CD4-positive, alpha-beta memory T cell (primary cell): ENCODE measurements at regions of chr1 and their contacts with region 1.

Region 1: DNA sequence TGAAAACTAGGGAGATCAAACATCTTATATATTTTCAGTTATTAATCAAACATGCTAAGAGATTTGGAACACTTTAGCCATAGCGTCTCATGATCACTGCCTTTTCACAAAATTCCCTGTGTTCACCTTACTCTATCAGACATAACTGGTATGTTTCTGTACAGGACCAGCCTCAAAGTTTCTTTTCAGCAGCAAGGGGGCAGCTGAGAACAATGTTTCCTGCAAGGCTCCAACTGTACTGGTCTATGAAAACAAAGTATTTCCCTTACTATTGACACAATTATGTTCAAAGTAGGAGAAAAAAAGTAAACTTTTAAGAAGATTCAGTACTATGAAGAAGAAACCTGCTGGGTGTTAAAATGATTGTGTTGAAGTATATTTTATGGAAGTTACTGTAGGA is 98.5 kb downstream of the ATF6 start:
- DNase-seq: peak in 2 of 5 donors; percentile 2 to 5
- H3K4me3 ChIP-seq: no peak overlapping the region
- H3K4me3 Mint-ChIP-seq: no peak overlapping the region
- H3K27ac ChIP-seq: no peak overlapping the region
- H3K27ac Mint-ChIP-seq: no peak overlapping the region
- H3K4me1 ChIP-seq: no peaks in the 10 kb centered on the region
- H3K4me1 Mint-ChIP-seq: peaks cover 0 to under 1% (median 0%) of the 10 kb centered on the region in 4 donors
- H3K27me3 ChIP-seq: no peaks in the 10 kb centered on the region
- H3K27me3 Mint-ChIP-seq: no peaks in the 10 kb centered on the region

Region 2: DNA sequence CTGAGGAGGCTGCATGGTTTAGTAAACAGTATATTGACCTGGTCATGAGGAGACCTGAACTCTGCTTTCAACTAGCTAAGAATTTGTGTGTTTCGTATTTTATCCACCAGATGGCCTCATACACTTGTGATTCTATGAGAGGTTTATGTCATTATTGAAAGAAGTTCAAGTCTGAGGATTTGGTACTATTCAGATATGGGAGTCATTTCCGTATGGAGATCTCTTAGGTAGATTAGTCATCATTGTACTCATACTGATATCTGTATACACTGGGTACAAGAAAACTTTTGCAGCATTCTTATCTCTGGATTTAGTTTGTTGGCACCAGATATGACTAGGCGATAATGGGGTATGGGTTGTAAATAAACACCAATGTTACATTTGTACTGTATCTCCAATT is 71.8 kb before region 1 on chr1:
- CTCF ChIA-PET with region 1: no interaction called
- POLR2A ChIA-PET with region 1: no interaction called
- intact Hi-C with region 1: no loop called
- DNase-seq: peak in 4 of 5 donors; percentile 42 to 49 (median 44)
- H3K4me3 ChIP-seq: no peak overlapping the region
- H3K4me3 Mint-ChIP-seq: no peak overlapping the region
- H3K27ac ChIP-seq: no peak overlapping the region
- H3K27ac Mint-ChIP-seq: peak overlapping the region in 1 of 7 donors; percentile 10
- H3K4me1 ChIP-seq: no peaks in the 10 kb centered on the region
- H3K4me1 Mint-ChIP-seq: peaks cover 3 to 7% (median 6%) of the 10 kb centered on the region in 4 donors
- H3K27me3 ChIP-seq: no peaks in the 10 kb centered on the region
- H3K27me3 Mint-ChIP-seq: no peaks in the 10 kb centered on the region

Region 3: GRCh38 chr1:162040681-162041080 is 176.1 kb after region 1 on chr1:
- CTCF ChIA-PET with region 1: interaction called, 15 read pairs
- POLR2A ChIA-PET with region 1: no interaction called
- intact Hi-C with region 1: no loop called
- DNase-seq: no peak
- H3K4me3 ChIP-seq: no peak overlapping the region
- H3K4me3 Mint-ChIP-seq: no peak overlapping the region
- H3K27ac ChIP-seq: no peak overlapping the region
- H3K27ac Mint-ChIP-seq: no peak overlapping the region
- H3K4me1 ChIP-seq: no peaks in the 10 kb centered on the region
- H3K4me1 Mint-ChIP-seq: peaks cover 0 to 3% (median 3%) of the 10 kb centered on the region in 4 donors
- H3K27me3 ChIP-seq: peaks cover 11% of the 10 kb centered on the region
- H3K27me3 Mint-ChIP-seq: peaks cover 9 to 29% of the 10 kb centered on the region in 2 donors

Region 4: GRCh38 chr1:162391790-162392563 is 527.4 kb after region 1 on chr1:
- CTCF ChIA-PET with region 1: no interaction called
- POLR2A ChIA-PET with region 1: no interaction called
- intact Hi-C with region 1: loop called (anchors 5 kb)
- DNase-seq: peak in 2 of 5 donors; percentile 1 to 2
- H3K4me3 ChIP-seq: no peak overlapping the region
- H3K4me3 Mint-ChIP-seq: no peak overlapping the region
- H3K27ac ChIP-seq: no peak overlapping the region
- H3K27ac Mint-ChIP-seq: peak overlapping the region in 1 of 7 donors; percentile 81
- H3K4me1 ChIP-seq: no peaks in the 10 kb centered on the region
- H3K4me1 Mint-ChIP-seq: peaks cover 0 to 6% (median 0%) of the 10 kb centered on the region in 4 donors
- H3K27me3 ChIP-seq: no peaks in the 10 kb centered on the region
- H3K27me3 Mint-ChIP-seq: peaks cover 7 to 26% of the 10 kb centered on the region in 2 donors